Naive thymus-derived CD8-positive, alpha-beta T cell (primary cell): ENCODE measurements at regions of chr3 and their contacts with region 1.

Region 1: DNA sequence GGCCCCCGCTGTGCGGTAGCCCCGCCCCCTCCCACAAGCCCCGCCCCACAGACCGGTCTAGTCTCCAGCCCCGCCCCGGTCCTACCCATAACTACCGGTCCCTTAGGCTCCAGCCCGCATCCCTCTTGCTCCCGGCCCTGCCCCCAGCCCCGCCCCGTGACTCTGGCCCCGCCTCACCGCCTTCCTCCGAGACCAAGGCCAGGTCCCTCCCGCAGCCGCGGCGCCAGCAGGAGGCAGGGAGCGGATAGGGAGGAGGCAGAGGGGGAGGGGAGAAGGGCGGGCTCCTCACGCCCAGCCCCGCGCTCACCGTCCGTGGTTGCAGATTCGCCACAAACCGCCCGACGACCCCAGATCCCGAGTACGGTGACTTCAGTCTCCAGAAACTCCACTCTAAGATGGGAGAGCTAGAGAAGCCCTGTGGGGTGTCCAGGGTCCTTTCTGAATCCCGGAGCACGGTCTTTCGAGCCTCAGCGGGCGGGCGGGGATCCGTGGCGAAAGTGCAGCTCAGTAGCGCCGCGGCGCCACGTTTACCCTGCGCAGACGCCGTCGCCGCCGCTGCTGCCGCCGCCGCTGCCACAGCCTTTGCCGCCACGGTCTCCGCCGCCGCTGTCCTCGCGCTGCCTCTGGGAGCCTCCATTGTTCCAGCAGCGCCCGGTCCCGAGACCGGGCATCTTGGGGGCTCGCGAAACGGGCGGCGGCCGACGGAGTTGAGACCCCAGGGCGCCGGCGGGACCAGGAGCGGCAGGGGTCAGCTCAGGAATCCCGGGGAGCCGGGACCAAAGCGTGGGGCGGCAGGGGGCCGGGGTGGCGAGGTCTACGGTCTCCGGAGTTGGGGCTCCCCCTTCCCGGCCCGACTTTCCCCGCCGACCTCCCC is at the start of gene BRPF1:
- DNase-seq: peak; percentile 95 to 99 (median 99)
- ATAC-seq: peak; percentile 93
- H3K4me3 Mint-ChIP-seq: peak within 1 kb of the TSS; percentile 84 to 99 (median 94)
- H3K27ac Mint-ChIP-seq: peak within 1 kb of the TSS; percentile 92 to 99 (median 95)
- H3K4me1 Mint-ChIP-seq: peaks cover 37 to 70% (median 63%) of the 10 kb centered on the region in 4 donors
- H3K27me3 Mint-ChIP-seq: no peaks in the 10 kb centered on the region
- polyA plus RNA-seq, gene BRPF1: 8.8 to 24.9 (median 10.8) TPM

Region 2: DNA sequence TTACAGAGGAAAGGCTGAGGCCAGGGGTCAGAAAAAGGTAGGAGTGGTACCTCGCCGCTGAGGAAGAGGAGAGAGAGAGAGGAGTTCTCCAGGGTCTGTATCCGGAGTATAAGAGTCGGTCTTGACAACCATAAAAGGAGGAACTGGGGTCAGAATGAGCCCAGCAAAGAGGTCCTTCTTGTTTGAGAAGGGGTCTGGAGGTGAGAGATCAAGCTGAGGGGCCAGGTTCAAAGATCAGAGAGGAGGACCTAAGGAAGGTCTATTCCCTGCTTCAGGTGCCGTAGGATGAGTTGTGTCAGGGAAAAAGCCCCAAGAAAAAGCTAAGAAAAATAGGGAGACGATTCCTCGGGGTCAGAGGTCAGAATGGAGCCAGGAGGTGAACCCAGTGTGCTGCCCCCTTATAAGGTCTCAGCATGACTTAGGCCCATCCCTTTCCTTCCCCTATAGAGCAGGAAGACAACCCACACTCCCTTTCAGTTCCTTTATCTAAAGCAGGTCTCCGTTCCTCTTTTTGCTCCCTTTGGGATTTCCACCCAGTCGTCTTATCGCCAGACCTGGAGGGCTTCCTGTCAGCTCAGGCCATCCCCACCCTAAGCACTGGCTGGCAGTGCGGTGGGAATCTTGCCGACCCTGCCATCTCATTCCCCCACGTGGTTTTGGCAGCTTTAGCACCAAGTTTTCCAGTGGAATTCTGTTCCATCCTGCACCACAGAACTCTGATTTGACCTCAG is 81.5 kb before region 1 on chr3:
- POLR2A ChIA-PET with region 1: interaction called, 25 read pairs
- DNase-seq: peak in 1 of 10 donors; percentile 7
- ATAC-seq: no peak
- H3K4me3 Mint-ChIP-seq: peak overlapping the region; percentile 80 to 99 (median 94)
- H3K27ac Mint-ChIP-seq: peak overlapping the region; percentile 88 to 98 (median 94)
- H3K4me1 Mint-ChIP-seq: peaks cover 18 to 51% (median 42%) of the 10 kb centered on the region in 4 donors
- H3K27me3 Mint-ChIP-seq: no peaks in the 10 kb centered on the region

Region 3: GRCh38 chr3:9717563-9717962 is 13.9 kb before region 1 on chr3:
- POLR2A ChIA-PET with region 1: no interaction called
- DNase-seq: no peak
- ATAC-seq: no peak
- H3K4me3 Mint-ChIP-seq: no peak overlapping the region
- H3K27ac Mint-ChIP-seq: peak overlapping the region in 1 of 10 donors; percentile 53
- H3K4me1 Mint-ChIP-seq: peaks cover 13 to 27% (median 14%) of the 10 kb centered on the region in 4 donors
- H3K27me3 Mint-ChIP-seq: peaks cover 0 to 6% (median 0%) of the 10 kb centered on the region in 5 donors

Region 4: GRCh38 chr3:9749645-9750555 is 18.5 kb after region 1 on chr3 and contains the start of gene OGG1:
- POLR2A ChIA-PET with region 1: interaction called, 52 read pairs
- DNase-seq: peak; percentile 80 to 98 (median 94)
- ATAC-seq: peak; percentile 95 to 96
- H3K4me3 Mint-ChIP-seq: peak within 1 kb of the TSS; percentile 91 to 99 (median 96)
- H3K27ac Mint-ChIP-seq: peak within 1 kb of the TSS; percentile 90 to 98 (median 93)
- H3K4me1 Mint-ChIP-seq: peaks cover 22 to 50% (median 47%) of the 10 kb centered on the region in 4 donors
- H3K27me3 Mint-ChIP-seq: no peaks in the 10 kb centered on the region
- polyA plus RNA-seq, gene OGG1: 15.3 to 20.7 (median 18.0) TPM